Activated B cell treated with CpG ODN at 0.5 μM for 24 hours (primary cell): ENCODE measurements at regions of chr5 and their contacts with region 1.

Region 1: GRCh38 chr5:56900858-56901578 is 8.4 kb upstream of the SETD9 start:
- DNase-seq: no peak
- ATAC-seq: peak; percentile 68
- H3K4me3 Mint-ChIP-seq: no peak overlapping the region
- H3K27ac Mint-ChIP-seq: no peak overlapping the region
- H3K4me1 Mint-ChIP-seq: no peaks in the 10 kb centered on the region
- H3K27me3 Mint-ChIP-seq: no peaks in the 10 kb centered on the region
- CTCF ChIP-seq: peak; percentile 10

Region 2: GRCh38 chr5:56973473-56973872 is 72.5 kb after region 1 on chr5:
- CTCF ChIA-PET with region 1: no interaction called
- POLR2A ChIA-PET with region 1: no interaction called
- intact Hi-C with region 1: no loop called
- DNase-seq: no peak
- ATAC-seq: no peak
- H3K4me3 Mint-ChIP-seq: no peak overlapping the region
- H3K27ac Mint-ChIP-seq: no peak overlapping the region
- H3K4me1 Mint-ChIP-seq: no peaks in the 10 kb centered on the region
- H3K27me3 Mint-ChIP-seq: peaks cover 2% of the 10 kb centered on the region
- CTCF ChIP-seq: no peak

Region 3: GRCh38 chr5:57032151-57032551 is 131.1 kb after region 1 on chr5:
- CTCF ChIA-PET with region 1: no interaction called
- POLR2A ChIA-PET with region 1: no interaction called
- intact Hi-C with region 1: no loop called
- DNase-seq: no peak
- ATAC-seq: no peak
- H3K4me3 Mint-ChIP-seq: no peak overlapping the region
- H3K27ac Mint-ChIP-seq: no peak overlapping the region
- H3K4me1 Mint-ChIP-seq: peaks cover 35% of the 10 kb centered on the region
- H3K27me3 Mint-ChIP-seq: no peaks in the 10 kb centered on the region
- CTCF ChIP-seq: no peak

Region 4: GRCh38 chr5:57277085-57277484 is 376.1 kb after region 1 on chr5:
- CTCF ChIA-PET with region 1: no interaction called
- POLR2A ChIA-PET with region 1: no interaction called
- intact Hi-C with region 1: loop called (anchors 2 kb)
- DNase-seq: no peak
- ATAC-seq: no peak
- H3K4me3 Mint-ChIP-seq: no peak overlapping the region
- H3K27ac Mint-ChIP-seq: no peak overlapping the region
- H3K4me1 Mint-ChIP-seq: no peaks in the 10 kb centered on the region
- H3K27me3 Mint-ChIP-seq: no peaks in the 10 kb centered on the region
- CTCF ChIP-seq: no peak

Region 5: GRCh38 chr5:57366744-57367143 is 465.7 kb after region 1 on chr5:
- CTCF ChIA-PET with region 1: no interaction called
- POLR2A ChIA-PET with region 1: no interaction called
- intact Hi-C with region 1: no loop called
- DNase-seq: no peak
- ATAC-seq: no peak
- H3K4me3 Mint-ChIP-seq: no peak overlapping the region
- H3K27ac Mint-ChIP-seq: no peak overlapping the region
- H3K4me1 Mint-ChIP-seq: no peaks in the 10 kb centered on the region
- H3K27me3 Mint-ChIP-seq: peaks cover 5% of the 10 kb centered on the region
- CTCF ChIP-seq: no peak